Activated T-helper 1 cell treated with anti-CD3 and anti-CD28 coated beads, Interleukin-12 subunit alpha, Interleukin-12 subunit beta, Interleukin-2, Interleukin-4 antibody, amounts not matched to agents 30 ng/mL and 10 ng/mL and 1 ng/mL, durations not matched to agents 14 hours and 24 hours and 36 hours (primary cell): ENCODE measurements at regions of chr14 and their contacts with region 1.

Region 1: GRCh38 chr14:35121887-35122695 is at the starts of genes PPP2R3C and PRORP:
- DNase-seq: peak; percentile 88
- H3K4me3 Mint-ChIP-seq: peak within 1 kb of the TSS; percentile 97
- H3K27ac Mint-ChIP-seq: peak within 1 kb of the TSS; percentile 100
- H3K4me1 Mint-ChIP-seq: peaks cover 61% of the 10 kb centered on the region
- H3K27me3 Mint-ChIP-seq: no peaks in the 10 kb centered on the region
- total RNA-seq, gene PPP2R3C: 48.2 and 52.4 TPM in 2 replicates
- total RNA-seq, gene PRORP: 34.1 and 38.0 TPM in 2 replicates

Region 2: GRCh38 chr14:34461334-34462131 is 660.6 kb before region 1 on chr14:
- intact Hi-C with region 1: loop called (anchors 2 kb)
- DNase-seq: no peak
- H3K4me3 Mint-ChIP-seq: peak overlapping the region; percentile 90
- H3K27ac Mint-ChIP-seq: peak overlapping the region; percentile 91
- H3K4me1 Mint-ChIP-seq: peaks cover 28% of the 10 kb centered on the region
- H3K27me3 Mint-ChIP-seq: no peaks in the 10 kb centered on the region

Region 3: GRCh38 chr14:34875031-34875922 is 246.8 kb before region 1 on chr14 and contains the start of gene BAZ1A:
- intact Hi-C with region 1: loop called (anchors 1 kb)
- DNase-seq: peak; percentile 41
- H3K4me3 Mint-ChIP-seq: peak within 1 kb of the TSS; percentile 100
- H3K27ac Mint-ChIP-seq: peak within 1 kb of the TSS; percentile 100
- H3K4me1 Mint-ChIP-seq: peaks cover 34% of the 10 kb centered on the region
- H3K27me3 Mint-ChIP-seq: peaks cover 2% of the 10 kb centered on the region
- total RNA-seq, gene BAZ1A: 75.0 and 83.7 TPM in 2 replicates

Region 4: GRCh38 chr14:35140718-35141581 is 18.9 kb after region 1 on chr14:
- intact Hi-C with region 1: loop called (anchors 2 kb)
- DNase-seq: no peak
- H3K4me3 Mint-ChIP-seq: no peak overlapping the region
- H3K27ac Mint-ChIP-seq: no peak overlapping the region
- H3K4me1 Mint-ChIP-seq: peaks cover 29% of the 10 kb centered on the region
- H3K27me3 Mint-ChIP-seq: no peaks in the 10 kb centered on the region

Region 5: DNA sequence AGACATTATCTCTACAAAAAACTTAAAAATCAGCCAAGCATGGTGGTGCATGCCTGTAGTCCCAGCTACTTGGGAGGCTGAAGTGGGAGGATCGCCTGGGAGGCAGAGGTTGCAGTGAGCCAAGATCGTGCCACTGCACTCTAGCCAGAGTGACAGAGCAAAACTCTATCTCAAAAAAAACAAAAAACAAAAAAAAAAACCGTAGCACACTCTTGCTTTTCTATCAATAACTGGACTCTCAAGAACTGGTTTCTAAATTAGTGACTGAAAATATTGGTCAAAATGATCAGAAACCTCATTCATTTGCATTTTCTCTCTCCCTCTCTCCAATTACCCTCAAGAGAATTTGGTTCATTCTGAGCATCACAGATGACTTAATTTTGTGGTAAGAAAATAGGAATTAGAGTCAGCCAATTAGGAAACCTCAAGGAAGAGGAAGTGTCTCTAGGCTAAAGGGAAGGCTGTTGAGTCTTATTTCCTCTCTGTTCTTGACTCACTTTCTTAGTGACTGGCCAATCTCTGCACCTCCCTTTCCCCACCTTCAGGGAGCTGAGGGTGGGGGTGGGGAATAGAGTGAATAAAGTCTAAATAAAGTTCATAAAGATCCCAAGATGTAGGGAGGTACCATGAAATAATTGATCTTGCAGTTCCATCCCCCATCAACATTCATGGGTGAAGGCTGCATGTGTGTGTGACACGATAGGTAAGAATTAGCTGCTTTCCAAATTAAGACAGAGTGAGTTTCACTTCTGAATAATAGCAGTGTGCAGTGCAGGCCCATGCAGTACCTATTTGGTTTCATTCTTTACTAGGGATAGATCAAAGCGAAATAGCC is 163.3 kb after region 1 on chr14:
- intact Hi-C with region 1: loop called (anchors 1 kb)
- DNase-seq: peak; percentile 17
- H3K4me3 Mint-ChIP-seq: peak overlapping the region; percentile 53
- H3K27ac Mint-ChIP-seq: peak overlapping the region; percentile 99
- H3K4me1 Mint-ChIP-seq: peaks cover 51% of the 10 kb centered on the region
- H3K27me3 Mint-ChIP-seq: no peaks in the 10 kb centered on the region

Region 6: GRCh38 chr14:35533357-35534207 is 411.5 kb after region 1 on chr14 and contains the start of gene INSM2:
- intact Hi-C with region 1: loop called (anchors 5 kb)
- DNase-seq: peak; percentile 55
- H3K4me3 Mint-ChIP-seq: peak within 1 kb of the TSS; percentile 73
- H3K27ac Mint-ChIP-seq: no peak within 1 kb of the TSS
- H3K4me1 Mint-ChIP-seq: peaks cover 5% of the 10 kb centered on the region
- H3K27me3 Mint-ChIP-seq: peaks cover 55% of the 10 kb centered on the region
- total RNA-seq, gene INSM2: not detected in 2 replicates

Region 7: GRCh38 chr14:35565871-35566464 is 443.9 kb after region 1 on chr14:
- intact Hi-C with region 1: no loop called
- DNase-seq: no peak
- H3K4me3 Mint-ChIP-seq: no peak overlapping the region
- H3K27ac Mint-ChIP-seq: no peak overlapping the region
- H3K4me1 Mint-ChIP-seq: no peaks in the 10 kb centered on the region
- H3K27me3 Mint-ChIP-seq: no peaks in the 10 kb centered on the region

Region 8: DNA sequence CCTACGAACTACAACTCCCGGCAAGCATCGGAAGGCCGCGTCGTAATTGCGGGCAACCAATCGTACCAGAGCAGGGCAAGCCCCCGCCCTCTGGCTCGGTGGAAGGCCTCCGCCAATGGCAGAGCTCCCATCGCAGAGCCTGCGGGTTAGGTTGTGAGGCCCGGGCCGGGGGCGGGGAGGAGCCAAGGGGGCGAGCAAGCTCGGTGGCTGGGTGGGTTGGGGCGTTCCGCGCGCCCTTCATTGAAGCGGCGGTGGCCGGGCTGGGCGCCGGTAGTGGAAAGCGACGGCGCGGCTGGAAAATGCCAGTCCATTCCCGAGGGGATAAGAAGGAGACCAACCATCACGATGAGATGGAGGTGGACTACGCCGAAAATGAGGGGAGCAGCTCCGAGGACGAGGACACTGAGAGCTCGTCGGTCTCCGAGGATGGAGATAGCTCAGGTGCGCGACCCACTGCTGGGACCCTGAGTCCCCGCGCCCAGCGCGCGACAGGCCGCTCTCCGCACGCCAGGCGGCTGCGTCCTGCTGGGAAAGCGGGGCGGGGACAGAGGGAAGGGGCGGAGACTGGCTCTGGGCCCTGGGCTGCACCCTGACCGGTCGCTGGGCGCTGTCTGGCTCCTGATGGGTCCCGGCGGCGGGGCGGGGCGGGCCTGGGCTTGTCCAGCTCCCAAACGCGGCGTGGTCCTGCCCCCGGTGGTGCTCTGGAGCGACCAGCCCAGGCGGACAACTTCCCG is 704.3 kb after region 1 on chr14 and contains the start of gene BRMS1L:
- intact Hi-C with region 1: loop called (anchors 1 kb)
- DNase-seq: peak; percentile 96
- H3K4me3 Mint-ChIP-seq: peak within 1 kb of the TSS; percentile 88
- H3K27ac Mint-ChIP-seq: peak within 1 kb of the TSS; percentile 90
- H3K4me1 Mint-ChIP-seq: peaks cover 16% of the 10 kb centered on the region
- H3K27me3 Mint-ChIP-seq: peaks cover 4% of the 10 kb centered on the region
- total RNA-seq, gene BRMS1L: 6.3 and 9.1 TPM in 2 replicates